CD4-positive, alpha-beta memory T cell (primary cell): ENCODE measurements at regions of chr3 and their contacts with region 1.

Region 1: GRCh38 chr3:124552239-124552638 is 178.0 kb upstream of the UMPS start:
- DNase-seq: no peak
- H3K4me3 ChIP-seq: no peak overlapping the region
- H3K4me3 Mint-ChIP-seq: no peak overlapping the region
- H3K27ac ChIP-seq: no peak overlapping the region
- H3K27ac Mint-ChIP-seq: no peak overlapping the region
- H3K4me1 ChIP-seq: peaks cover 5% of the 10 kb centered on the region
- H3K4me1 Mint-ChIP-seq: peaks cover 0 to 7% (median 3%) of the 10 kb centered on the region in 4 donors
- H3K27me3 ChIP-seq: peaks cover 4% of the 10 kb centered on the region
- H3K27me3 Mint-ChIP-seq: peaks cover 20 to 51% of the 10 kb centered on the region in 2 donors

Region 2: GRCh38 chr3:124492811-124493210 is 59.4 kb before region 1 on chr3:
- CTCF ChIA-PET with region 1: interaction called, 3 read pairs
- POLR2A ChIA-PET with region 1: no interaction called
- intact Hi-C with region 1: loop called (anchors 1 kb)
- DNase-seq: no peak
- H3K4me3 ChIP-seq: no peak overlapping the region
- H3K4me3 Mint-ChIP-seq: no peak overlapping the region
- H3K27ac ChIP-seq: no peak overlapping the region
- H3K27ac Mint-ChIP-seq: no peak overlapping the region
- H3K4me1 ChIP-seq: no peaks in the 10 kb centered on the region
- H3K4me1 Mint-ChIP-seq: peaks cover 7 to 18% (median 15%) of the 10 kb centered on the region in 4 donors
- H3K27me3 ChIP-seq: no peaks in the 10 kb centered on the region
- H3K27me3 Mint-ChIP-seq: peaks cover 8 to 14% of the 10 kb centered on the region in 2 donors